ENCODE measurements at regions of chr20 and their contacts with region 1.

Region 1: GRCh38 chr20:22403632-22404361 is 180.6 kb downstream of the FOXA2 start:
- DNase-seq: no peak
- H3K4me3 ChIP-seq: peak overlapping the region; percentile 4 to 32
- H3K27ac ChIP-seq: no peak overlapping the region
- H3K4me1 ChIP-seq: peaks cover 19% of the 10 kb centered on the region
- H3K27me3 ChIP-seq: no peaks in the 10 kb centered on the region
- CTCF ChIP-seq: no peak
- POLR2A ChIP-seq: no peak

Region 2: DNA sequence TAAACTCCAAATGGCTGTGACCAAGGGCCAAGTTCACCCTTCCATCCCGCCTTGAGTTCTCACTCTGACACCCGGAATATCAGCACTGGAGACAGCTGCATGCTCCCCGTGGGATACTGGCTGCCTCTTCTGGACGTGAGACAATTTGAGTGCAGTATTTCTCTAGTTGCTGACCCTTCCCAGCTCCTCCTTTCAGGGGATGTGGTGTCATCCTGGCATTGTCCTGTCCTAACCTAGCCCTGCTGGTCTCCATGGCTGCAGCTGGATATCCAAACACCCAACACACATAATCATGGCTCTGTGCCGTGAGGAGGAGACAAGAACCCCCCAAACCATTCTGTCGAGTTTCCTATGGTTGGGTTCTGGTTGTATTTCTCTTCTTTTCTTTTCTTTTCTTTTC is 615.7 kb before region 1 on chr20:
- intact Hi-C with region 1: no loop called
- DNase-seq: no peak
- H3K4me3 ChIP-seq: no peak overlapping the region
- H3K27ac ChIP-seq: no peak overlapping the region
- H3K4me1 ChIP-seq: no peaks in the 10 kb centered on the region
- H3K27me3 ChIP-seq: no peaks in the 10 kb centered on the region
- CTCF ChIP-seq: no peak
- POLR2A ChIP-seq: no peak

Region 3: GRCh38 chr20:22333885-22334545 is 69.8 kb before region 1 on chr20:
- intact Hi-C with region 1: no loop called
- DNase-seq: no peak
- H3K4me3 ChIP-seq: no peak overlapping the region
- H3K27ac ChIP-seq: no peak overlapping the region
- H3K4me1 ChIP-seq: no peaks in the 10 kb centered on the region
- H3K27me3 ChIP-seq: no peaks in the 10 kb centered on the region
- CTCF ChIP-seq: peak; percentile 16 to 47 (median 38)
- POLR2A ChIP-seq: no peak

Region 4: GRCh38 chr20:23193801-23194382 is 790.1 kb after region 1 on chr20:
- intact Hi-C with region 1: no loop called
- DNase-seq: no peak
- H3K4me3 ChIP-seq: no peak overlapping the region
- H3K27ac ChIP-seq: no peak overlapping the region
- H3K4me1 ChIP-seq: no peaks in the 10 kb centered on the region
- H3K27me3 ChIP-seq: no peaks in the 10 kb centered on the region
- CTCF ChIP-seq: no peak
- POLR2A ChIP-seq: no peak

Region 5: GRCh38 chr20:23659989-23660837 is 1256.4 kb after region 1 on chr20:
- intact Hi-C with region 1: loop called (anchors 5 kb)
- DNase-seq: peak in 1 of 2 donors; percentile 49
- H3K4me3 ChIP-seq: no peak overlapping the region
- H3K27ac ChIP-seq: peak overlapping the region; percentile 38
- H3K4me1 ChIP-seq: peaks cover 16% of the 10 kb centered on the region
- H3K27me3 ChIP-seq: no peaks in the 10 kb centered on the region
- CTCF ChIP-seq: no peak
- POLR2A ChIP-seq: no peak

Region 6: GRCh38 chr20:23856749-23857148 is 1453.0 kb after region 1 on chr20:
- intact Hi-C with region 1: no loop called
- DNase-seq: no peak
- H3K4me3 ChIP-seq: no peak overlapping the region
- H3K27ac ChIP-seq: no peak overlapping the region
- H3K4me1 ChIP-seq: no peaks in the 10 kb centered on the region
- H3K27me3 ChIP-seq: no peaks in the 10 kb centered on the region
- CTCF ChIP-seq: no peak
- POLR2A ChIP-seq: no peak